PC-3 (cell line): ENCODE measurements at regions of chr9 and their contacts with region 1.

Region 1: DNA sequence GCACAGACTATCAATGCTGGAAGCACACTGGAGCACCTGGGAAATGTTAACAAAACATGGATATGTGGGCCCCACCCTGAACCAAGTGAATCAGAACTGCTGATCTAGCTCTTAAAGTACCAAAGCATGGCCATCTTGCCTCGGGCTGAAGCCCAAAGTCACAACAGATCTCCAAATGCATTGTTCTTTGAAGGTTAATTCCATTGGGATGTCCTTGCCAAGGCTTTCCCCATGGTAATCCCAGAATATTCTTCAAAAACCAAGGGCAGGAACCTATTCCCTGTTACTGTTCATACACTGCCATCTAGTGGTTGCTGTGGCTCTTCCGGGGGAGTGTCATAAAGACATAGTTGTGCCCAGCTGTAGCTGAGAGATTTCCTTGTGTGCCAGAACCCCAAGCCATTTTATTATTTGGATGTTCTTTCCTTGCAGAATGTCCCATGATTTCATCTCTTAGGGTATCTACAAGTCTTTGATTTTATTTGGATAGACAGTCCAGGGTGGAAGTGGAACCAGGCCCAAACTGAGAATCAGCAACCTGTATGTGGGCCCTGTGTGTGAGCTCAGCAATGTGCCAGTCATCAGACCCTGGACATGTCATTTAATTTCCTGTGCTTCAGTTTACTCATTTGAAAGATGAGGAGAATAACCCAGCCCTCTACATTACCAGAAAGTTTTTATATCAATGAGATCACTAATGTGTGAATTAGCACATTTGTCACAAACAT is 290.0 kb downstream of the ACTL7B start:
- DNase-seq: peak; percentile 90
- ATAC-seq: peak; percentile 72
- H3K4me3 ChIP-seq: no peak overlapping the region
- H3K27ac ChIP-seq: peak overlapping the region; percentile 74
- H3K4me1 ChIP-seq: peaks cover 25% of the 10 kb centered on the region
- H3K27me3 ChIP-seq: no peaks in the 10 kb centered on the region
- CTCF ChIP-seq: peak; percentile 90

Region 2: GRCh38 chr9:107465467-107466451 is 1100.1 kb before region 1 on chr9:
- CTCF ChIA-PET with region 1: no interaction called
- POLR2A ChIA-PET with region 1: no interaction called
- intact Hi-C with region 1: loop called (anchors 1 kb)
- DNase-seq: peak; percentile 55
- ATAC-seq: peak; percentile 94
- H3K4me3 ChIP-seq: peak overlapping the region; percentile 85
- H3K27ac ChIP-seq: no peak overlapping the region
- H3K4me1 ChIP-seq: 0 out of 2 replicates have a peak, but pooled peaks cover 4% of the 10 kb centered on the region
- H3K27me3 ChIP-seq: no peaks in the 10 kb centered on the region
- CTCF ChIP-seq: peak; percentile 73

Region 3: GRCh38 chr9:107749787-107750444 is 815.9 kb before region 1 on chr9:
- CTCF ChIA-PET with region 1: no interaction called
- POLR2A ChIA-PET with region 1: no interaction called
- intact Hi-C with region 1: loop called (anchors 5 kb)
- DNase-seq: peak; percentile 84
- ATAC-seq: peak; percentile 78
- H3K4me3 ChIP-seq: peak overlapping the region; percentile 53
- H3K27ac ChIP-seq: peak overlapping the region; percentile 99
- H3K4me1 ChIP-seq: peaks cover 45% of the 10 kb centered on the region
- H3K27me3 ChIP-seq: no peaks in the 10 kb centered on the region
- CTCF ChIP-seq: no peak

Region 4: GRCh38 chr9:108671176-108671575 is 105.4 kb after region 1 on chr9:
- CTCF ChIA-PET with region 1: no interaction called
- POLR2A ChIA-PET with region 1: no interaction called
- intact Hi-C with region 1: loop called (anchors 10 kb)
- DNase-seq: peak; percentile 59
- ATAC-seq: peak; percentile 55
- H3K4me3 ChIP-seq: no peak overlapping the region
- H3K27ac ChIP-seq: no peak overlapping the region
- H3K4me1 ChIP-seq: peaks cover 8% of the 10 kb centered on the region; the same call in 1 of the 2 replicates
- H3K27me3 ChIP-seq: no peaks in the 10 kb centered on the region
- CTCF ChIP-seq: peak; percentile 77

Region 5: GRCh38 chr9:108813951-108814601 is 248.3 kb after region 1 on chr9:
- CTCF ChIA-PET with region 1: no interaction called
- POLR2A ChIA-PET with region 1: no interaction called
- intact Hi-C with region 1: loop called (anchors 5 kb)
- DNase-seq: peak; percentile 82
- ATAC-seq: peak; percentile 91
- H3K4me3 ChIP-seq: no peak overlapping the region
- H3K27ac ChIP-seq: no peak overlapping the region
- H3K4me1 ChIP-seq: peaks cover 20% of the 10 kb centered on the region
- H3K27me3 ChIP-seq: no peaks in the 10 kb centered on the region
- CTCF ChIP-seq: peak; percentile 82